Mammary epithelial cell (primary cell): ENCODE measurements at regions of chr2 and their contacts with region 1.

Region 1: GRCh38 chr2:191265311-191266170 is 20.3 kb downstream of the MYO1B start:
- DNase-seq: no peak
- H3K4me3 ChIP-seq: no peak overlapping the region
- H3K27ac ChIP-seq: no peak overlapping the region
- H3K4me1 ChIP-seq: peaks cover 33% of the 10 kb centered on the region
- H3K27me3 ChIP-seq: no peaks in the 10 kb centered on the region
- CTCF ChIP-seq: no peak

Region 2: DNA sequence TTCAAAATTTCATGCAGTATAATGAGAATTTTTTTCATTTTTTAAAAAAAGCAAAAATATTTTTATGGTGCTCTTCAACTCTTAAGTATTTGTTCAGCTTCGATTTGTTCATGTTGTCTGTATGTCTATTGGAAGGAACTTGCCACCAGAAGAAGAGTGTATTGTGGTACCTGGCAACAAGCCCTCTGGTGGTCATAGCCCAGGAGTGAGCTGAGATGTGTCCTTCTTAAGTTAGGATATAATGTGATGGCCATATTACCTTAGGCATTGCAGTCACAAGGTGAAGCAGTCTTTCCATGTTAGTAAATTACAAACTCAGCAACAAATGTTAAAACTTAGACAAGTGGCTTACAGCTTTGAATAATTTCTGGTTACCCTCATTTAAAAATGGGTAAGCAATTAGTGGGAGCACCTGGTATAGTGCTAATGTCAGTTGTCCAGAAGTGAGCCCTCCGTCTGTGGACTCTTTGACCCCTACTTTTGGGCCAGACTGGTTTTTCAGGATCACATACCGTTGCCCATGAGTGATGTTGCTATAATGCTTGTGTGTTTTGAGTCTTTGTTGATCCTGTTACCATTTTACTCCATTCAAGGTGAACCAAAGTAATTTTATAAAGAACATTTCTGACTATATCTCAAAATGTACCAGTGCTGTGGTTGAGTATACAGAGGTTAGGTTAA is 37.1 kb after region 1 on chr2:
- CTCF ChIA-PET with region 1: no interaction called
- dilution Hi-C with region 1: loop called (anchors 5 kb)
- in situ Hi-C with region 1: no loop called
- intact Hi-C with region 1: no loop called
- DNase-seq: peak; percentile 37
- H3K4me3 ChIP-seq: no peak overlapping the region
- H3K27ac ChIP-seq: peak overlapping the region; percentile 97
- H3K4me1 ChIP-seq: peaks cover 53% of the 10 kb centered on the region
- H3K27me3 ChIP-seq: no peaks in the 10 kb centered on the region
- CTCF ChIP-seq: peak; percentile 39 to 54